ENCODE measurements at regions of chr12 and their contacts with region 1.

Region 1: DNA sequence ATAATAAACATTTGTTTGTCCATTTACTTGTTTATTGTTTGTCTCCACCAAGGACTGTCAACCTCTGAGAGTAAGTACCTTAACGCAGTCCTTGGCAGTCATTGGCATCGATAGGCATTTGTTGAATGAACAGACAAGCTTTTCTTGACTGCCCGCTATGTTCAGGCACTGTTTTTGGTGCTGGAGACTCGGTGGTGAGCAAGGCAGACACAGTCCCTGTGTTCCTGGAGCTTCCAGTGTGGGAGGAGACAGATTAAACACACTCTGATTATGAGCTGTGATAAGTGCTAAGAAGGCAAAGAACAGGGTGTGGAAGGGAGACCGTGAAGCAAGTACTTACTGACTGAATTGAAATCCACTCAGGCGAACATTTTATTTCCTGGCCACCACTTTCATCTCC is 1.2 kb downstream of the ATP6V0A2 start:
- DNase-seq: peak; percentile 26
- H3K4me3 Mint-ChIP-seq: peak overlapping the region; percentile 80
- H3K27ac Mint-ChIP-seq: peak overlapping the region; percentile 83
- H3K4me1 Mint-ChIP-seq: peaks cover 42% of the 10 kb centered on the region
- H3K27me3 Mint-ChIP-seq: no peaks in the 10 kb centered on the region

Region 2: DNA sequence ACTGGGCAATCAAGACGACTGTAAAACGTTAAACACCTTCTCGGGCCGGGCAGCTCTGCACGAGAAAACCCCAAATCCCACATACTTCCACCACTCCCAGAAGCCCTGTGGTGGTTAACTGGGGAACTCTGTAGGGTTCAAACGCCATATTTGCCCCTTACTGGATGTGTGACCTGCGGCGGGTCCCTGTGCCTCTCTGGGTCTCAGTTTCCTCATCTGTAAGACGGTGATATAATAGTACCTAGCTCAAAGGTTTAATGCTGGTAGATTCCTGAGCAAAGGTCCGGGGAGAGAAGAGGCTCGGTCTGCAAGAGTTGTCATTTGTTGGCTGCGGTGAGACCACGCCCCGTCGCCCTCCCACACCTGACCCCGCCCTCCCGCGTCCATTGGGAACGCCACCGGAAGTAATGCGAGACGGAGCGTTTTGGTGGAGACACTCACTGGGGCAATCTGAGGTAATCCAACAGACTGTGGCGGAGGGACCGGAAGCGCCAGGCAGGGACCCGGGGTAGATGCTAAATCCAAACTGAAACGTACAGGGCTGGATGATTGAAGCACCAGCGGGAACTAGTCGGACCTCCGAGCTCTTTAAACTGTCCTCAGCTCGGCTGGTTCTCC is 739.0 kb before region 1 on chr12:
- CTCF ChIA-PET with region 1: no interaction called
- intact Hi-C with region 1: loop called (anchors 10 kb)
- DNase-seq: peak; percentile 100
- H3K4me3 Mint-ChIP-seq: peak overlapping the region; percentile 90
- H3K27ac Mint-ChIP-seq: peak overlapping the region; percentile 100
- H3K4me1 Mint-ChIP-seq: peaks cover 33% of the 10 kb centered on the region
- H3K27me3 Mint-ChIP-seq: no peaks in the 10 kb centered on the region

Region 3: GRCh38 chr12:123365025-123365917 is 348.1 kb before region 1 on chr12:
- CTCF ChIA-PET with region 1: no interaction called
- intact Hi-C with region 1: loop called (anchors 1 kb)
- DNase-seq: peak; percentile 98
- H3K4me3 Mint-ChIP-seq: peak overlapping the region; percentile 85
- H3K27ac Mint-ChIP-seq: peak overlapping the region; percentile 99
- H3K4me1 Mint-ChIP-seq: peaks cover 24% of the 10 kb centered on the region
- H3K27me3 Mint-ChIP-seq: no peaks in the 10 kb centered on the region

Region 4: DNA sequence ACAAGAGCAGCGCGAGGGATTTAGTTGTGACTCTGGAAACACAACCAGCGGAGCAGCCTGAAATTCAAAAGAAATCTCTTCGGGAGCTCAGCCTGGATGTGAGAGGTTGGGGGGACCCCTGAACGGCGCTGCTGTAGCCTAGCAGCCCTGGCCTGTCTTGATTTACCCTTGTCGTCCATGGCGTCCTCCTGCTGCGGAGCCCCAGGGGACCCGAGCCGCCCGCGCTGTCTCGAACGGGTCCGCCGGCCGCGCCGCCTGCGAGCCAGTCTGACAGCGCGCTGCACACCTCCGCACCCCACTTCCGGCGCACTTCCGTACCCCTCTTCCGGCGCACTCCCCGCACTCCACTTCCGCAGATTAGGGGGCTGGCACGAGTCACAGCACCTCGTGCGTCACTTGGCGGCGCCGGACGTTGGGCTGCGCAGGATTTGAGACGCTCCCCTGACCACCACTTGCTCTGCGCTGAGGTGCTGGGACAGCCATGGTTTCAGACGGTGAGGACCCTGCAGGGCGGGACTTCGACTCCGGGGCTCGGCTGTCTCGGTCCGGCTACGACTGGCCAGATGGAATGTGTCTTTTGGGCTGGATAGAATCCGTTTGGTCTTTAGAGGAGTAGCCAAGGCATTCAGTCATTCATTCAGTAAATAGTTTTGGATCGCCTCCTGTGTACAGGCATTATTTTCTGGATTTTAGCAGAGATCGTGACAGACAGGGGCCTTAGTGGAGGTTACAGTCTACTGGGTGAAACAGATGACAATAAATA is 79.8 kb before region 1 on chr12 and contains the starts of genes EIF2B1 and GTF2H3:
- CTCF ChIA-PET with region 1: no interaction called
- intact Hi-C with region 1: loop called (anchors 1 kb)
- DNase-seq: peak; percentile 99
- H3K4me3 Mint-ChIP-seq: peak within 1 kb of the TSS; percentile 99
- H3K27ac Mint-ChIP-seq: peak within 1 kb of the TSS; percentile 94
- H3K4me1 Mint-ChIP-seq: peaks cover 33% of the 10 kb centered on the region
- H3K27me3 Mint-ChIP-seq: no peaks in the 10 kb centered on the region
- total RNA-seq, gene EIF2B1: 54.3 to 60.9 TPM
- total RNA-seq, gene GTF2H3: 56.6 to 57.7 TPM

Region 5: DNA sequence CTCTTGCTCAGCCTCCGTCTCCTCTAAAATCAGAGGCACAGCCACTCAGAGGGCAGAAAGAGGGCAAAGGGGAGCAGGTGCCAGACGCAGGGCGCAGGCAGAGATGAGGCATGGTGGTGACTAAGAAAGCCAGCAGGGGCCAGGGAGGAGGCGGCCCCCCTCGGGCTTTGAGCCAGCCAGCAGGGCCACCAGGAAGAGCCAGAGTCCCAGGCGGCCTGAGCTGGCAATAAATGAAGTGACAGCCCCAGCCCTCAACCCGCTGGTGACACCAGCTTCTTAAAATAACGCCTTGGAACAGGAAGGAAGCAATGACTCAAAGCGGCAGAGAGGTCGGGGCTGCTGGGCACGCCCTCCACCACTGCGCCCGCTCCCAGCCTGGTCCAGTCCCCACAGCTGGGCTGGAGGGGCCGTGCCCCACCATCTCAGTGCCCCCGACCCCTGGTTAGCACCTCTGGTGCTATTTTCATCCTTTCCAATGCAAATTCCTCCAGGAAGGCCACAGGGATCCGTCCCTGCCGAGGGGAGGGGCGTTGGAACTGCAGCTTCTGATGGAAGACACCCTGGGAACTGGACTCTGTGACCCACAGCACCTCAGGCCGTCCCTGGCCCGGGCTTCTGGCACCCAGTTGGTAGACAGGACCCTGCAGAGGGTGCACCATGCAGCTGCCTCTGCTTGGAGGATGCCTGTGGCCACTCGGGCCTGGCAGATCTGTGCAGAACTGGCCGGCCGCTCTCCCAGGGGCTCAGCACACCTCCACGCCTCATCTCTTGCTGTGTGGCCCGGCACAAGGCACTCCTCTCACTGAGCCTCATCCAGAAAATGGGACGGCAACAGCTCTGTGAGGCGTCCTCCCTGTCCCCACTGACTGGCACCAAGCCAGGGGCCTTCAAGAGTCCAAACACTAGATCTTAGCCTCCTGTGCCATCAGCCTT is 740.3 kb after region 1 on chr12:
- CTCF ChIA-PET with region 1: no interaction called
- intact Hi-C with region 1: loop called (anchors 5 kb)
- DNase-seq: peak; percentile 93
- H3K4me3 Mint-ChIP-seq: no peak overlapping the region
- H3K27ac Mint-ChIP-seq: no peak overlapping the region
- H3K4me1 Mint-ChIP-seq: peaks cover 57% of the 10 kb centered on the region
- H3K27me3 Mint-ChIP-seq: no peaks in the 10 kb centered on the region

Region 6: DNA sequence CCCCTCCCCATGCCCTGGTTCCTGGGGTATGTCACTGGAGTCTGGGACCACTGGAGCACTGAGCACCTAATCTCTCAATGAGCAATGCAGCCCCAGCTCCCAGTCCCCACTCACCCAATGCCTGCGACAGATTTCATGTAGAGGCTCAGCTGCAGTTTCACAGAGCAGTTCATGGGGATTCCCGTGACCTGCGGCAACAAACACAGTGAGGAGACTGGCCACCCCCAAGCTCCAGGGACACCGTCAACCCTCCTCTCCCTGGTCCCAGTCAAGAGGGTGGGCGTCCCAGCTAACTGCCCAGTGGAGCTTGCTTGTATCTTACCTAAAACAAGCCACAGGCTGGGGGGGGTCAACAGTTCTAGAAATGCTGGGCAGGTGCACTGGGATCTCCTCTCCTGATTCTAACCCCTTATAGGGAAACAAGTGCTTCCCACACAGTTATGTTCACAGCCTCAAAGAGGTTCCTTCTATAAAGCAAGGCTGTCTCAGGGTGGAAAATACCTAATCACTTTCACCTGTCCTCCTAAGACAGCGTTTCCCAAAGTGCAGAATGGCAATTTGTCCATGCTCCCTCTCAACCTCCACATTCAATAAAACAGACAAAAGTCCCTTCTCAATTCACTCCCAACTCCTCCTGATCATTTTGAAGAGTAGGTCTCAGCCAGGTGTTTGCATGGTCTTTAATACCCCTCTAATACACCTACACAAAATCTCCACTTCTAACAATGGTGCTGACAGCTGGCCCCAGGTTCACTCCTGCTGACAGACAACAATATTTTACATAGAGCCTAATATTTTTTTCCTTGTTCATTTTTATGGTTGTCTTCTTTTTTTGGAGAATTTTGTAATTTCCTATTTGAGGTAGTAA is 1081.9 kb after region 1 on chr12:
- CTCF ChIA-PET with region 1: no interaction called
- intact Hi-C with region 1: no loop called
- DNase-seq: no peak
- H3K4me3 Mint-ChIP-seq: no peak overlapping the region
- H3K27ac Mint-ChIP-seq: no peak overlapping the region
- H3K4me1 Mint-ChIP-seq: peaks cover 13% of the 10 kb centered on the region
- H3K27me3 Mint-ChIP-seq: no peaks in the 10 kb centered on the region

Region 7: GRCh38 chr12:124917135-124917840 is 1203.9 kb after region 1 on chr12:
- CTCF ChIA-PET with region 1: no interaction called
- intact Hi-C with region 1: loop called (anchors 5 kb)
- DNase-seq: peak; percentile 98
- H3K4me3 Mint-ChIP-seq: peak overlapping the region; percentile 73
- H3K27ac Mint-ChIP-seq: peak overlapping the region; percentile 100
- H3K4me1 Mint-ChIP-seq: peaks cover 83% of the 10 kb centered on the region
- H3K27me3 Mint-ChIP-seq: peaks cover 6% of the 10 kb centered on the region

Measured in activated naive CD4-positive, alpha-beta T cell treated with anti-CD3 and anti-CD28 coated beads for 36 hours (primary cell).